ENCODE measurements at regions of chr11 and their contacts with region 1.

Region 1: DNA sequence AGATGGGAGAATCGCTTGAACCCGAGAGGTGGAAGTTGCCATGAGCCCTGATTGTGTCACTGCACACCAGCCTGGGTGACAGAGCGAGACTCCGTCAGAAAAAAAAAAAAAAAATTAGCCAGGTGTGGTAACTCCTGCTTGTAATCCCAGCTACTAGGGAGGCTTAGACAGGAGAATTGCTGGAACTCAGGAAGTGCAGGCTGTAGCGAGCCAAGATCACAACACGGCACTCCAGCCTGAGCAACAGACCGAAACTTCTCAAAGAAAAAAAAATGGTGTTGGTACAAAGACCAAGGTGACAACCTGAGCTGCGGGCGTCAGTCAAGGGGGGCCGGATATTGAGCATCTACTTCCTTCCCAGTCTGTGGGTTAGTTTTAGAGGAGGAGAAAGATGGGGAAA is 48.4 kb upstream of the HSPA8 start:
- DNase-seq: peak in 2 of 9 experiments; percentile 22 to 41
- ATAC-seq: no peak
- H3K4me3 ChIP-seq: no peak overlapping the region
- H3K4me3 Mint-ChIP-seq: peak overlapping the region; percentile 62
- H3K27ac ChIP-seq: no peak overlapping the region
- H3K27ac Mint-ChIP-seq: peak overlapping the region; percentile 71
- H3K4me1 ChIP-seq: no peaks in the 10 kb centered on the region
- H3K4me1 Mint-ChIP-seq: peaks cover 4% of the 10 kb centered on the region
- H3K27me3 ChIP-seq: no peaks in the 10 kb centered on the region
- H3K27me3 Mint-ChIP-seq: no peaks in the 10 kb centered on the region
- CTCF ChIP-seq: no peak

Region 2: DNA sequence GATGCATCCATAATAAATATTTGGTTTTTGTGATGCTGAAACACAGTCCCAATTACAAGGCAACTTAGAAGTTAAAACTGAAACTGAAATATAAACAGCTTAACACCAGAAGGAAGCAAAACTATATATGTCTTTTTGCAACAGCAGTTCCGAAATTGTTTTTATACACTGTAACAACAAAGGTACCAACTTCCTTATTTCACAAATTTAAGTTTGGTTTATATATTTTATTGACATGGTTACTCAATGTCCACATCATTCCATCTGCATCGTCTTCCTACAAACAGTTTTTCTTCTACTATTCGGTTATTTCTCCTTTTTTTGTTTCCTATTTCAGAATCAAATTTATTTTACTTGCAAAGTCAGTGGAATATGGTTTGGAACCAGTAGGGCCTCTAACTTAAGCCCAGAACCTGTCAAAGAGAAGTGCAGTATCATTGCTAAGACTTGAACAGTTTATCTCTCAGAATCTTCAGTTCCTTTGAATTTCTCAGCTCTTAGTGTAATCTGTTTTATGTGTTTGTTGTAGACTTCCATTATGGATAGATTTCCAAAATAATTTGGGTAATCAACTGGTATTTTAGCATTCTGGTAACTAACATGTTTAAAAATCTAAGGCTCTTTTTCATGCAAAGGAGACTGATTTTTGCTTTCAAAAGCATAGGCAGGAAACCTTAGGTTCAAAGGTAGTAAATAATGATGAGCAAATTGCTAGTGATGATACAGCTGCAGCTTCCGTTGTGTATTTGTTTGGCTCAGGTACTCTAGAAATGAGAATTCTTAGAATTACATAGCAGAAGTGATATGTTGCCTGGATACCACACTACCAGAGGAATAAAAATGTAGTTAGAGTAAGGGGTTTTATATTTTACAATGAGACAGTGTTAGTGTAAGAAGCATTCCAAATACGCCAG is 40.2 kb before region 1 on chr11:
- CTCF ChIA-PET with region 1: interaction called, 11 read pairs
- POLR2A ChIA-PET with region 1: interaction called, 3 read pairs
- intact Hi-C with region 1: no loop called
- DNase-seq: peak in 2 of 9 experiments; percentile 46 to 65
- ATAC-seq: peak; percentile 71
- H3K4me3 ChIP-seq: peak overlapping the region; percentile 40 to 50
- H3K4me3 Mint-ChIP-seq: peak overlapping the region; percentile 84
- H3K27ac ChIP-seq: peak overlapping the region; percentile 80 to 85
- H3K27ac Mint-ChIP-seq: peak overlapping the region; percentile 92
- H3K4me1 ChIP-seq: peaks cover 52% of the 10 kb centered on the region
- H3K4me1 Mint-ChIP-seq: peaks cover 66% of the 10 kb centered on the region
- H3K27me3 ChIP-seq: no peaks in the 10 kb centered on the region
- H3K27me3 Mint-ChIP-seq: no peaks in the 10 kb centered on the region
- CTCF ChIP-seq: no peak

Region 3: DNA sequence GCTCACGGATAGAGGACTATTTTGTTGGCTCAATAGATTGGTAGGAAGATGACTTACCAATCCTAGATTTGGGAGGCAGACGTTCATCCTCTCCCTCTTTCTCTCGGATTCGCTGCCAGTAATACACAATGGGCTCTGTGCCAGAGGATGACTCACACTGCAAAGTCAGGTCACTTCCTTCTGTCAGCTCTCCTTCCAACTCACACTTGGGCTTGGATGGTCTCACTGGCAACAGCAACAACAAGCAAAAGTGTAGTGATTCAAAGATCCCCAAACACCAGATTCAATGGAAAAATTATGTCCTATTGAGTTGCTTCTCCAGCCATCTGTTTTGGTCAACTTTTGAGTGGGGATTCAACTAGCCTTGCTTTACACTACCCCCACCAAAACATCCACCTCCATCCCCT is 26.7 kb before region 1 on chr11:
- CTCF ChIA-PET with region 1: interaction called, 15 read pairs
- POLR2A ChIA-PET with region 1: no interaction called
- intact Hi-C with region 1: no loop called
- DNase-seq: peak in 8 of 9 experiments; percentile 45 to 82 (median 69)
- ATAC-seq: no peak
- H3K4me3 ChIP-seq: no peak overlapping the region
- H3K4me3 Mint-ChIP-seq: peak overlapping the region; percentile 20
- H3K27ac ChIP-seq: peak overlapping the region in 1 of 2 experiments; percentile 42
- H3K27ac Mint-ChIP-seq: peak overlapping the region; percentile 45
- H3K4me1 ChIP-seq: peaks cover 33% of the 10 kb centered on the region
- H3K4me1 Mint-ChIP-seq: peaks cover 44% of the 10 kb centered on the region
- H3K27me3 ChIP-seq: no peaks in the 10 kb centered on the region
- H3K27me3 Mint-ChIP-seq: no peaks in the 10 kb centered on the region
- CTCF ChIP-seq: no peak

Region 4: GRCh38 chr11:123093739-123094138 is 16.6 kb before region 1 on chr11:
- CTCF ChIA-PET with region 1: interaction called, 15 read pairs
- POLR2A ChIA-PET with region 1: interaction called, 4 read pairs
- intact Hi-C with region 1: no loop called
- DNase-seq: no peak
- ATAC-seq: no peak
- H3K4me3 ChIP-seq: no peak overlapping the region
- H3K4me3 Mint-ChIP-seq: no peak overlapping the region
- H3K27ac ChIP-seq: no peak overlapping the region
- H3K27ac Mint-ChIP-seq: no peak overlapping the region
- H3K4me1 ChIP-seq: no peaks in the 10 kb centered on the region
- H3K4me1 Mint-ChIP-seq: peaks cover 12% of the 10 kb centered on the region
- H3K27me3 ChIP-seq: no peaks in the 10 kb centered on the region
- H3K27me3 Mint-ChIP-seq: no peaks in the 10 kb centered on the region
- CTCF ChIP-seq: no peak

Region 5: DNA sequence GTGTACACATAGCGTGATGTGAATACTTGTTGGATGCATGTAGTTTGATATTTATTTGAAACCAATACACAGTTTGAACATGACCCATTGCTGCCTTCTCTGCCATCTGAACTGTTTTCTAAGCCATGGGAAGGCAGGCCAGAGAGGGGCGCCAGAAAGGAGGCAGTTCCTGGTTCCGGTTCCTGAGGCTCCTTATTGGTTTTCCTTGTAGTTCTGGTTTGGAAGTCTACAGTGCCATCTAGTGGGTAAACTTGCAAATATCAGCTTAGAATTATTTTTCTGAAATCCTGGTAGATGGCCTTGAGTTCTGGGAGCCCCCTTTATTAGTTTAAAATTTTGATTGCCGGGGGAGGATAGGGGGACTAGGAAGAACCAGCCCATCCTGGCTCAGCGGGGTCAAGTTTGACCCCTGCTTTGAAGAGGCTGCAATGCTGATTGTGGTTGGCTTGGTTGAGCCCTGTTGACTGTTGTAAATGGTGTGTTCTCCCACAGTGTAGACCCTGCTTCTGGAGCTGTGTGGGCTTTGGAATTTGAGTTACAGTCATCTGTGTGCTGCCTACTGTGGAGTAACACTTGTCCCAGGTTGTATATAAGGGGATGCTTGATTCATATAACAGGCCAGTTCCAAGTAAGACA is 368.1 kb after region 1 on chr11:
- CTCF ChIA-PET with region 1: interaction called, 3 read pairs
- POLR2A ChIA-PET with region 1: no interaction called
- intact Hi-C with region 1: loop called in 1 of 2 experiments (anchors 10 kb)
- DNase-seq: peak in 5 of 9 experiments; percentile 12 to 76 (median 59)
- ATAC-seq: peak; percentile 37
- H3K4me3 ChIP-seq: peak overlapping the region in 1 of 2 experiments; percentile 2
- H3K4me3 Mint-ChIP-seq: peak overlapping the region; percentile 13
- H3K27ac ChIP-seq: no peak overlapping the region
- H3K27ac Mint-ChIP-seq: no peak overlapping the region
- H3K4me1 ChIP-seq: no peaks in the 10 kb centered on the region
- H3K4me1 Mint-ChIP-seq: peaks cover 18% of the 10 kb centered on the region
- H3K27me3 ChIP-seq: no peaks in the 10 kb centered on the region
- H3K27me3 Mint-ChIP-seq: no peaks in the 10 kb centered on the region
- CTCF ChIP-seq: peak; percentile 93